Spleen (tissue), 13 donors: ENCODE measurements at regions of chr7 and their contacts with region 1.

Region 1: DNA sequence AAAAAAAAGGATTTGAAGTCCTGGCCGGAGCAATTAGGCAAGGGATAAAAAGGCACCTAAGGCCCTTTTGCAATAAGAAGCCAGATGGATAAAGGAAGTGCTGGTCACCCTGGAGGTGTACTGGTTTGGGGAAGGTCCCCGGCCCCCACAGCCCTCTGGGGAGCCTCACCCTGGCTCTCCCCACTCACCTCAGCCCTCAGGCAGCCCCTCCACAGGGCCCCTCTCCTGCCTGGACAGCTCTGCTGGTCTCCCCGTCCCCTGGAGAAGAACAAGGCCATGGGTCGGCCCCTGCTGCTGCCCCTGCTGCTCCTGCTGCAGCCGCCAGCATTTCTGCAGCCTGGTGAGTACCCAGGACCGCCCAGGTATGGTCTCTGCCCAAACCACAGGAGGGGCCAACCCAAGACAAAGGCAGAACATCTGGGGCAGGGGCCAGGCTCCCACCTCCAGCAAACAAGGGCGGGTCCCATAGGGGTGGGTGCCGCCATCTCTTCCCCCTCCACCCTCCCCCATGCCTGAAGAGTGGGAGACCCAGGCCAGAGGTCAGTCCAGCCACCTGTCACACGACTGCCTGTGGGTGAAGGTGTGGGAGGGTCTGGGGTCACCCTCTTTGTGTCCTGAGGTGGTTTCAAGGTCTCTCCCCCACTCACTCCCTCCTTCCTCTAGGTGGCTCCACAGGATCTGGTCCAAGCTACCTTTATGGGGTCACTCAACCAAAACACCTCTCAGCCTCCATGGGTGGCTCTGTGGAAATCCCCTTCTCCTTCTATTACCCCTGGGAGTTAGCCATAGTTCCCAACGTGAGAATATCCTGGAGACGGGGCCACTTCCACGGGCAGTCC is at the start of gene PILRB:
- DNase-seq: peak; percentile 78
- H3K4me3 ChIP-seq: peak within 1 kb of the TSS in 2 of 8 donors; percentile 6 to 48
- H3K27ac ChIP-seq: peak within 1 kb of the TSS in 7 of 8 donors; percentile 25 to 89 (median 71)
- H3K4me1 ChIP-seq: peaks cover 0 to 67% (median 23%) of the 10 kb centered on the region in 6 donors
- H3K27me3 ChIP-seq: no peaks in the 10 kb centered on the region
- CTCF ChIP-seq: peak in 3 of 11 experiments; percentile 19 to 27 (median 26)
- POLR2A ChIP-seq: no peak
- total RNA-seq, gene PILRB: 66.2 to 114 (median 70.5) TPM

Region 2: GRCh38 chr7:100384628-100385294 is 26.5 kb after region 1 on chr7:
- intact Hi-C with region 1: no loop called
- DNase-seq: no peak
- H3K4me3 ChIP-seq: no peak overlapping the region
- H3K27ac ChIP-seq: peak overlapping the region in 3 of 8 donors; percentile 21 to 47 (median 21)
- H3K4me1 ChIP-seq: peaks cover 0 to 40% (median 9%) of the 10 kb centered on the region in 6 donors
- H3K27me3 ChIP-seq: no peaks in the 10 kb centered on the region
- CTCF ChIP-seq: no peak
- POLR2A ChIP-seq: no peak

Region 3: GRCh38 chr7:100407285-100408180 is 49.3 kb after region 1 on chr7:
- intact Hi-C with region 1: loop called (anchors 10 kb)
- DNase-seq: no peak
- H3K4me3 ChIP-seq: no peak overlapping the region
- H3K27ac ChIP-seq: no peak overlapping the region
- H3K4me1 ChIP-seq: peaks cover 0 to 19% (median 7%) of the 10 kb centered on the region in 6 donors
- H3K27me3 ChIP-seq: no peaks in the 10 kb centered on the region
- CTCF ChIP-seq: peak; percentile 57 to 81 (median 76)
- POLR2A ChIP-seq: no peak